ENCODE measurements at regions of chr1 and their contacts with region 1.

Region 1: GRCh38 chr1:10917513-10918454 is 94.7 kb upstream of the TARDBP start:
- DNase-seq: no peak
- ATAC-seq: peak; percentile 40
- H3K4me3 Mint-ChIP-seq: peak overlapping the region; percentile 16
- H3K27ac Mint-ChIP-seq: no peak overlapping the region
- H3K4me1 Mint-ChIP-seq: peaks cover 35% of the 10 kb centered on the region
- H3K27me3 Mint-ChIP-seq: peaks cover 31% of the 10 kb centered on the region

Region 2: GRCh38 chr1:10932088-10932487 is 14.3 kb after region 1 on chr1:
- CTCF ChIA-PET with region 1: interaction called, 4 read pairs
- POLR2A ChIA-PET with region 1: interaction called, 3 read pairs
- intact Hi-C with region 1: loop called in 1 of 2 experiments (anchors 1 kb)
- DNase-seq: peak; percentile 74
- ATAC-seq: peak; percentile 92
- H3K4me3 Mint-ChIP-seq: no peak overlapping the region
- H3K27ac Mint-ChIP-seq: no peak overlapping the region
- H3K4me1 Mint-ChIP-seq: peaks cover 10% of the 10 kb centered on the region
- H3K27me3 Mint-ChIP-seq: peaks cover 16% of the 10 kb centered on the region

Region 3: DNA sequence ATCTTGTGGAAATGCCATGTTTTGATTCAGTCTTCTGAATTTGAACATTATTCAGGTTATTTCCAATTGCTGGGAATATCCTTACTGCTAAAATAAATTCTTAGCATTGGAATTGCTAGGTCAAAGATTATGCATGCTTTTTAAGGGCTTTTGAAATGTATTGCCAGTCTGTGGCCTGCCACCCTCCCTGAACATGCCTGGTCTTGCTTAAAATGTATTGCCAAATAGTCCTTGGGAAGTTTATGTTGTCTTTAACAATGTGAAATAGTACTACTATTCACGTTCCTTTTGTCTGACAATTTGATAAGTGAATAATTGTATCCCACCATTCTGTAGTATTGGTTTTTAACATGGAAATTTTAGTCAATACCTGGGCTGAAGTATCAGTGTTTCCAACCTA is 108.3 kb after region 1 on chr1:
- CTCF ChIA-PET with region 1: no interaction called
- POLR2A ChIA-PET with region 1: no interaction called
- intact Hi-C with region 1: no loop called
- DNase-seq: no peak
- ATAC-seq: no peak
- H3K4me3 Mint-ChIP-seq: no peak overlapping the region
- H3K27ac Mint-ChIP-seq: peak overlapping the region; percentile 32
- H3K4me1 Mint-ChIP-seq: peaks cover 22% of the 10 kb centered on the region
- H3K27me3 Mint-ChIP-seq: no peaks in the 10 kb centered on the region